ENCODE measurements at regions of chr1 and their contacts with region 1.

Region 1: GRCh38 chr1:167517535-167518330 is 596 bp downstream of the CD247 start:
- DNase-seq: peak; percentile 70 to 93 (median 83)
- ATAC-seq: peak; percentile 71
- H3K4me3 ChIP-seq: peak overlapping the region; percentile 89
- H3K4me3 Mint-ChIP-seq: peak overlapping the region; percentile 99
- H3K27ac ChIP-seq: peak overlapping the region; percentile 91 to 96
- H3K27ac Mint-ChIP-seq: peak overlapping the region; percentile 100
- H3K4me1 ChIP-seq: peaks cover 31% of the 10 kb centered on the region
- H3K4me1 Mint-ChIP-seq: peaks cover 69% of the 10 kb centered on the region
- H3K27me3 ChIP-seq: no peaks in the 10 kb centered on the region
- H3K27me3 Mint-ChIP-seq: no peaks in the 10 kb centered on the region
- CTCF ChIP-seq: no peak

Region 2: DNA sequence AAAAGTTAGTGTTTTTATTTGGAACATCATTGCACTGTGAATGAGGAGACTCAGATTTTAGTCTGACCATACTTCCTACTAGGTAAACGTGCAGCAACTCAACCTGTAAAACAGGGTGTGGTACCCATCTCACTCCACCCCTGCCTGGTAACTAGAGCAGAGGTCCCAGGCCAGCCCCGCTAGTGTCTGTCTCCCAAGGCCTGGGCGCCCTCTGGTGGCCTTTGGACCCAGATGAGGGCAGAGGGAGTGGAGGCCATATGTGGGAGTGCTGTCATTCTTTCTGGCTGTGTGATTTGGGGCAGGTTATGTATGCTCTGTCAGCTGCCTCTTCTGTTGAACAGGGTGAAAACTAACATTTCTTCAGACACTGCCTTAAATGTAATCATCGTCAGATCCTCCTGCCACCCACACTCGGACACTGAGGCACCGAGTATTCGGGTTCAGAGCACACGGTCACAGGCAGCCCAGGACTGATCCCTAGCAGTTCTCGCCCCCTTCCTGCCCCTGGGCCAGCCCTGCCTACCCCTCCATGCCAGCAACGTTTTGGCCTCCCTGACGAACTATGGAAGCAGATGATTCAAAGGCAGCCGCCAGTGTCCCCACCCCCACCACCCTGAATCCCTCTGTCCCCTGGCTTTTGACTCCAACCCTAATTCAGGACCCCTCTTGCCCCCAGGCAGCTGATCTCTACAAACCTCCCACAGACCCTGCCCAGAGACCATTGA is 75.4 kb before region 1 on chr1:
- CTCF ChIA-PET with region 1: interaction called, 7 read pairs
- POLR2A ChIA-PET with region 1: interaction called, 126 read pairs
- intact Hi-C with region 1: loop called in 1 of 2 experiments (anchors 2 kb)
- DNase-seq: peak; percentile 79 to 92 (median 88)
- ATAC-seq: peak; percentile 84
- H3K4me3 ChIP-seq: no peak overlapping the region
- H3K4me3 Mint-ChIP-seq: peak overlapping the region; percentile 45
- H3K27ac ChIP-seq: peak overlapping the region in 1 of 2 donors; percentile 41
- H3K27ac Mint-ChIP-seq: peak overlapping the region; percentile 100
- H3K4me1 ChIP-seq: peaks cover 91% of the 10 kb centered on the region
- H3K4me1 Mint-ChIP-seq: peaks cover 89% of the 10 kb centered on the region
- H3K27me3 ChIP-seq: no peaks in the 10 kb centered on the region
- H3K27me3 Mint-ChIP-seq: no peaks in the 10 kb centered on the region
- CTCF ChIP-seq: peak; percentile 86

Region 3: DNA sequence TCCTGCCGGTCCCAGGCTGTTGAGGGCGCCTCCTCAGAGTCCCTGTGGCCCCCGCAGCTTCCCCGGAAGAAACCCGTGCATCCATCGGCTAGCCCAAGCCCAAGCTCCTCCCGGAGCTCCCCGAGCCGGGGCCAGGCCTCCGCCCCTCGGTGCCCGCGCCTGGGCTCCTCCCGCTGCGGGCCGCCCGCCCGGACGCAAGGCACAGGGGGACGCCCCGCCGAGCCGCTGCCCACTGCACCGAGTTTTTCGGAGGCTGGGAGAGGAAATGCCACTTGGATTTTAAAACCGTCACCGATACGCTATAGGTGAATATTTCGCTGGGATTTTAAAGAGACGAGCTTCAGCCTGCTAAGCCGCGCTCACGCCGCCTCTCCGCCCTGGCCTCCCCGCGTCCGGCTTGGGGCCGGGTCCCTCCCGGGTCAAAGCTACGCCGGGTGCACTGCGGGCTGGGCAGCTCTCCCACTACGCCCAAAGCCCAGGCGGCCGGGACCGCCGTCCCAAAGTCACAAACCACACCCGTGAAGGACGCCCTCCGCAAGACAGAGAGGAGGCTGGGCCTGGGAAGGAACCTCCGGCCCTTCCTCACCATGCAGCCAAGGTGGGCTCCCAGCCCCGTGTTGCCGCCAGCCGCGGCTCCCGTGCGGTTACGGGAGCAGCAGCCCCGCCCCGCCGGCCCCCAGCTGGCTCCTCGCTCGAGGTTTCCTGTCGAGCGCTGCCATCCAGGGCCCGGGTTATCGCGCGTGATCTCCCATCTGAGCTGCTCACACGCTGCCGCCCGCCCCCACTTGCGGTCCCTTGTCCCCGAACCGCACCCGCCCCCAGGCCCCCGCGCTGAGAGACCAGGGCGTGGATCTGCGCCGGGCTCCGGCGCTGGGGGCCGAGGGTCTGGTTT is 62.6 kb before region 1 on chr1:
- CTCF ChIA-PET with region 1: interaction called, 8 read pairs
- POLR2A ChIA-PET with region 1: interaction called, 202 read pairs
- intact Hi-C with region 1: loop called (anchors 1 to 2 kb)
- DNase-seq: peak; percentile 70 to 93 (median 80)
- ATAC-seq: peak; percentile 69
- H3K4me3 ChIP-seq: peak overlapping the region; percentile 76
- H3K4me3 Mint-ChIP-seq: peak overlapping the region; percentile 94
- H3K27ac ChIP-seq: peak overlapping the region; percentile 93 to 98
- H3K27ac Mint-ChIP-seq: peak overlapping the region; percentile 100
- H3K4me1 ChIP-seq: peaks cover 88% of the 10 kb centered on the region
- H3K4me1 Mint-ChIP-seq: peaks cover 82% of the 10 kb centered on the region
- H3K27me3 ChIP-seq: no peaks in the 10 kb centered on the region
- H3K27me3 Mint-ChIP-seq: no peaks in the 10 kb centered on the region
- CTCF ChIP-seq: no peak

Region 4: DNA sequence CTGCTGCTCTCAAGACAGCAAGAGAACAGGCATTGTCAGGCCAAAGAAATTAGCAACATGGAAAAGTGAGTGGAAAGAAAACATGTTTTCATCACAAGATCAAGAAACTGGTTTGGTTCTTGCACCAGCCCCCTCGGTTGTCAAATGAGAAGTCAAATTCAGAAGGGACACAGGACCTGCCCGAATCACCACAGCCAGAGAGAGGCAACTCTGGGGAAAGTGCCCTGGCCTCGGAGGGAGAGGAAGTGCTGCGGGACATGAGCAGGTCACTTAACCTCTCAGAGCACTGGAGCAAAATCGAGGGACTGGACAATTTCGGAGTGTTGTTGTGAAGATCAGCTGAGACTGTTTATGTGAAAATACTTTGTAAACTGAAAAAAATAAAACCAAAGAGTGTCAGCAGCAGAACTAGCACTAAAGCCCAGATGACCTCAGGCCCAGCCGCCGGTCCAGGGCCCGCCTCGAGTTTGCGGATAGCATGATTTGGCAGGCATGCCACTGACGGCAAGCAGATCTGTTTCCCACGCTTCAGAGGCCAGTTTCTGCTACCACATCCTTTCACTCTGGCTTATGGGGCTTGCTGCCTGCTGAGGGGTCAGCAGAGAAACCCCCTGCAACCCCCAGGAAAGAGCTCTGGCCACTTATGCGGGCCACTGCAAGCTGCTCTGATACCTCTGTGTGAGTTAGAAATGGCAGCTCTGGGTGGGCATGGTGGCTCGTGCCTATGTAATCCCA is 31.5 kb before region 1 on chr1:
- CTCF ChIA-PET with region 1: interaction called, 32 read pairs
- POLR2A ChIA-PET with region 1: interaction called, 203 read pairs
- intact Hi-C with region 1: loop called (anchors 2 to 5 kb)
- DNase-seq: peak in 3 of 14 experiments; percentile 40 to 51 (median 46)
- ATAC-seq: no peak
- H3K4me3 ChIP-seq: peak overlapping the region; percentile 22
- H3K4me3 Mint-ChIP-seq: peak overlapping the region; percentile 80
- H3K27ac ChIP-seq: peak overlapping the region; percentile 78 to 80
- H3K27ac Mint-ChIP-seq: peak overlapping the region; percentile 100
- H3K4me1 ChIP-seq: peaks cover 98% of the 10 kb centered on the region
- H3K4me1 Mint-ChIP-seq: peaks cover 100% of the 10 kb centered on the region
- H3K27me3 ChIP-seq: no peaks in the 10 kb centered on the region
- H3K27me3 Mint-ChIP-seq: no peaks in the 10 kb centered on the region
- CTCF ChIP-seq: no peak

Region 5: DNA sequence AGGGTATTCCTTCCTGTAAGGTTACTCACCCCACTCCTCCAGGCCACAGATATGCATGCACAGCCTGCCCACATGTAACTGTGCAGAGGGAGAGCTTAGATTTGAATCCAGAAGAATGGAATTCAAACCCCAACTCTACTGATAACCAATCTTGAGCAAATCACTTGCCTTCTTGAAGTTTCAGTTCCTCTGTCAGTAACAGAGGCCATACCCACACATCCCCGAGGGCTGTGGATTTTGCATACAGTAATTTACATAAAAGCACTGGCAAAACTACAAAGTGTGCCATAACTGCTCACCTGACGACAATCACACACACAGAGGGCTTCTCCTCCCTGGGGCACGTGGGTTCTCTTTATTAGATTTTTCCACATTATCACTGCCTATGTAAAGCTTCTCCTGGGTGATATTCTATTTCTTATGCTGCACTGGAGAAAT is 18.1 kb before region 1 on chr1:
- CTCF ChIA-PET with region 1: interaction called, 12 read pairs
- POLR2A ChIA-PET with region 1: interaction called, 115 read pairs
- intact Hi-C with region 1: loop called (anchors 1 to 2 kb)
- DNase-seq: peak in 4 of 14 experiments; percentile 34 to 70 (median 52)
- ATAC-seq: peak; percentile 68
- H3K4me3 ChIP-seq: no peak overlapping the region
- H3K4me3 Mint-ChIP-seq: peak overlapping the region; percentile 47
- H3K27ac ChIP-seq: peak overlapping the region; percentile 26 to 29
- H3K27ac Mint-ChIP-seq: peak overlapping the region; percentile 100
- H3K4me1 ChIP-seq: peaks cover 96% of the 10 kb centered on the region
- H3K4me1 Mint-ChIP-seq: peaks cover 99% of the 10 kb centered on the region
- H3K27me3 ChIP-seq: no peaks in the 10 kb centered on the region
- H3K27me3 Mint-ChIP-seq: no peaks in the 10 kb centered on the region
- CTCF ChIP-seq: no peak

Region 6: DNA sequence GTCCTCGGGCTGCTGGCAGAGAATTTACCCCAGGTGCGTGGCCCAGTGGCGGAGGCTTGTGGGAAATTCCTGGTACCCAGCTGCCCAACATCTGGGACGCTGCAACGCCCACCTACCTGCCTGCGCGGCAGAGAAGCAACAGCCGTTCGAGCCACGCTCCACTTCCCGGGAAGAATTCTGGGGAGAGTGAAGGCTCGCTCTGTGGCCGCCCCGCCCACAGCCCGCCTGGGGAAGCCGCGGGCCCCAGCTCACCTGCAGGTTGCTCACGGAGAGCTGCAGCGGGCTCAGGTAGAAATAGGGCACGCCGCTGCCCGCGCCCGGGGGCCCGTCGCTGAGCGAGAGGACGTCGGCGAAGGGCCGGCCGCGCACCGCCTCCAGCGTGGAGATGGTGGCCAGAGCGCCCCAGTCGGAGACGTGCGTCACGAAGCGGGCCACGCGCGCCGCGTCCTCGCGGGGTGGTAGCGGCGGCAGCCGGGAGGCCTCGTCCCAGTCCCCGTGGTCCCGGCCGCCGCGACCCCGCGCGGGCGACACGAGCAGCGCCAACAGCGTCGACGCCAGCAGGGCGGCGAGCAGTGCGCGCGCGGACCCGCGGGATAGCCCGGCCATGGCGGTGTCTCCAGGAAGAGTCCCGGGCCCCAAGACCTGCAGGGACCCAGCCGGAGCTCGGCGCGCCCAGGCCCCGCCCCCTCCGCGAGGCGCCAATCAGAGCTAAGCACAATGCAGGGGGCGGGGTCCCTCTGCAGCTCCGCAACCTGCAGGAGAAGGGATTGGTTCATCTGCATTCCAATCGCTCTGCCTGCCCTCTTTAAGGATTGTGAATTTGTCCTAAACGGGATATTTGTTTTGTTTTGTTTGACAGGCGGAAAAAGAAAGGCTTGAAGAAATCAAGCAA is 35.6 kb after region 1 on chr1 and contains the start of gene CREG1:
- CTCF ChIA-PET with region 1: interaction called, 5 read pairs
- POLR2A ChIA-PET with region 1: interaction called, 32 read pairs
- intact Hi-C with region 1: no loop called
- DNase-seq: peak; percentile 76 to 95 (median 86)
- ATAC-seq: peak; percentile 97
- H3K4me3 ChIP-seq: peak within 1 kb of the TSS; percentile 75
- H3K4me3 Mint-ChIP-seq: peak within 1 kb of the TSS; percentile 96
- H3K27ac ChIP-seq: peak within 1 kb of the TSS in 1 of 2 donors; percentile 25
- H3K27ac Mint-ChIP-seq: peak within 1 kb of the TSS; percentile 81
- H3K4me1 ChIP-seq: peaks cover 25% of the 10 kb centered on the region
- H3K4me1 Mint-ChIP-seq: peaks cover 42% of the 10 kb centered on the region
- H3K27me3 ChIP-seq: no peaks in the 10 kb centered on the region
- H3K27me3 Mint-ChIP-seq: no peaks in the 10 kb centered on the region
- CTCF ChIP-seq: no peak
- total RNA-seq, gene CREG1: 10.7 to 11.2 TPM